Tibial artery (tissue), 4 donors: ENCODE measurements at regions of chr13 and their contacts with region 1.

Region 1: DNA sequence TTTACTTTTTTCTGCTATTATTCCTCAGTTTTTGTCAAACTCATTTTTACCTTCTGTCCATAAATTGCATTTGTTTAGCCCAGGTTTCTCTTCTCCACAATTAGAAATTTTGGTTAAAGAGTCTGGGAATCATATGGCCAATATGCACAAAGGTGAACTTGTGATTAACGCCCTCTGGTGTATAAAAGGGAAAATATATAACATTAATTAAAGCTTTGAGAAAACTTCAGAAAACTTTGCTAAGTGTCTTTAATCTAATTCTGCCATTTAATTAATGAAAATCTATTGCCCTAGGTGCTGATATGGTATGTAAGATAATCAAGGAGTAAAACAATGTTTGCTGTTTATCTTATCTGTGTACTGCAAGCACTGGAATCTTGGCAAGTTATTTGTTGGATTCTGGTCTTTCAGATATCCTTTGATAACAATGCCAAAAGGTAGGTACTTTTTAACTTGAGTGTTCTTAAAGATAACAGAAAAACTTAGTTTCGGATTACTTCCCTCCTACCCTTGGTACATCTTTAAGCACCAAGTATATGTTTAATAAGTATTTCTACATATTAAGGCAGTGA is 402.6 kb downstream of the SUCLA2 start:
- DNase-seq: no peak
- H3K4me3 ChIP-seq: no peak overlapping the region
- H3K27ac ChIP-seq: no peak overlapping the region
- H3K4me1 ChIP-seq: no peaks in the 10 kb centered on the region
- H3K27me3 ChIP-seq: no peaks in the 10 kb centered on the region
- CTCF ChIP-seq: peak; percentile 30 to 44

Region 2: DNA sequence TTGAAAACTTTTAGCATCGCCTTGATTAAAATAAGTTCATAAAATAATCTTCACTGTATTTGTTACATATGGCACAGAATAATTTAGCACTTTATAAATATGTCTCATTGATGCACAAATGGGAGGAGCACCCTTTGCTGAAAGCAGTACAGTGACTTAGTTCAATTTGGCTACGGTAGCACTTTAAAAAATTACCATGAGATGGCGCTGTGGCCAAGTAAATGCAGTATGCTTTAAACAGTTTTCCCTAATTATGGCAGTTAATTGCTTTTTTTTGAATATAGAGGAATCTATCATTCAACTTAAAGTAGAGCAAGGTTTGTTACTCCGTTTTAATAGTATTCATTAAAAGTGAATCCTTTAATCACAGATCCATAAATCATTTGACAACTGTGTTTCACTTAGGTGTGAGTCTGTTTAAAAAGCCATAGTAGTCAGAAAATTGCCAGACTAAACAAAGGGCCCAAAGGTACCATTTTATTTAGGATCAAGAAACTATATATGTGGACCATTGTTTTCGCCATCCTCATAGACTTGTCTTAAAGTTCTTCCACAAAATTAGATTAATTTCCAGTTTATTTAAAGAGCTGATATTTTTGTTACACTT is 766.7 kb before region 1 on chr13:
- intact Hi-C with region 1: loop called (anchors 2 kb)
- DNase-seq: no peak
- H3K4me3 ChIP-seq: no peak overlapping the region
- H3K27ac ChIP-seq: no peak overlapping the region
- H3K4me1 ChIP-seq: no peaks in the 10 kb centered on the region
- H3K27me3 ChIP-seq: no peaks in the 10 kb centered on the region
- CTCF ChIP-seq: peak; percentile 72 to 87

Region 3: GRCh38 chr13:47673000-47673915 is 74.8 kb after region 1 on chr13:
- intact Hi-C with region 1: no loop called
- DNase-seq: no peak
- H3K4me3 ChIP-seq: no peak overlapping the region
- H3K27ac ChIP-seq: peak overlapping the region; percentile 53 to 54
- H3K4me1 ChIP-seq: peaks cover 0 to 24% (median 4%) of the 10 kb centered on the region in 4 donors
- H3K27me3 ChIP-seq: no peaks in the 10 kb centered on the region
- CTCF ChIP-seq: no peak